ENCODE measurements at regions of chr2 and their contacts with region 1.

Region 1: DNA sequence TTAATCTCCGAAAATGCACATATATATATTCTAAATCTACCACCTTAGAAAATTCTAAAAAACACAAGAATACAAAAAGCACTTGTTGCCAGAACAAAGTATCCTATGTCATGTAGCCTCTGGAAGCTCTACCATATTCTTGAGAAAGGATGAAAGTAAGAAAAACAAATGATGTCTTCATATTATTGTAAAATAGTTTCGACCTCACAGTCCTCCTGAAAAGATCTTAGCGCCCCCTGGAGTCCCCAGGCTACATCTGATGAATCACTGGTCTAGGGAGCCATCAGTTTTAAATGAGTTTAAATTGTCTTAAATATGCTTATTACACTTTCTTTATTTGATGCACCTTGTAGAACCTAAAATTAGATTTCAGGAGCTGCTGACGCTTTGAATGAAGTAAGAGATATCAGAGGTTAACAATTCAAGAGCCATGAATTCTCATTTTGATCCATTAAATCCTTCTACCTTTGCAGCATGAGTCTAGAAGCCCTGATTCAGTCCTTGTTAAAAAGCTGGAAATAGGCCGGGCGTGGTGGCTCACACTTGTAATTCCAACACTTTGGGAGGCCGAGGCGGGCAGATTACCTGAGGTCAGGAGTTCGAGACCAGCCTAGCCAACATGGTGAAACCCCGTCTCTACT is 138.8 kb downstream of the MCFD2 start:
- DNase-seq: no peak
- ATAC-seq: peak; percentile 87
- H3K4me3 ChIP-seq: no peak overlapping the region
- H3K27ac ChIP-seq: no peak overlapping the region
- H3K4me1 ChIP-seq: no peaks in the 10 kb centered on the region
- H3K27me3 ChIP-seq: no peaks in the 10 kb centered on the region
- CTCF ChIP-seq: peak; percentile 67 to 74 (median 71)
- EP300 ChIP-seq: no peak
- POLR2A ChIP-seq: no peak
- RAD21 ChIP-seq: peak; percentile 83

Region 2: GRCh38 chr2:46041434-46041833 is 735.4 kb before region 1 on chr2:
- CTCF ChIA-PET with region 1: no interaction called
- POLR2A ChIA-PET with region 1: no interaction called
- RAD21 ChIA-PET with region 1: no interaction called
- SMC1A ChIA-PET with region 1: no interaction called
- in situ Hi-C with region 1: no loop called
- intact Hi-C with region 1: no loop called
- DNase-seq: no peak
- ATAC-seq: no peak
- H3K4me3 ChIP-seq: no peak overlapping the region
- H3K27ac ChIP-seq: no peak overlapping the region
- H3K4me1 ChIP-seq: no peaks in the 10 kb centered on the region
- H3K27me3 ChIP-seq: no peaks in the 10 kb centered on the region
- CTCF ChIP-seq: no peak
- EP300 ChIP-seq: no peak
- POLR2A ChIP-seq: no peak
- RAD21 ChIP-seq: no peak

Region 3: GRCh38 chr2:46657042-46657504 is 119.7 kb before region 1 on chr2:
- CTCF ChIA-PET with region 1: interaction called, 42 read pairs
- POLR2A ChIA-PET with region 1: no interaction called
- RAD21 ChIA-PET with region 1: no interaction called
- SMC1A ChIA-PET with region 1: interaction called, 15 read pairs
- in situ Hi-C with region 1: loop called (anchors 10 kb)
- intact Hi-C with region 1: loop called (anchors 1 kb)
- DNase-seq: no peak
- ATAC-seq: peak; percentile 94
- H3K4me3 ChIP-seq: no peak overlapping the region
- H3K27ac ChIP-seq: no peak overlapping the region
- H3K4me1 ChIP-seq: no peaks in the 10 kb centered on the region
- H3K27me3 ChIP-seq: no peaks in the 10 kb centered on the region
- CTCF ChIP-seq: peak; percentile 48 to 52 (median 50); a peak in 5 of 6 replicates
- EP300 ChIP-seq: no peak
- POLR2A ChIP-seq: no peak
- RAD21 ChIP-seq: peak; percentile 57

Region 4: GRCh38 chr2:46669996-46670793 is 106.6 kb before region 1 on chr2:
- CTCF ChIA-PET with region 1: interaction called, 4 read pairs
- POLR2A ChIA-PET with region 1: no interaction called
- RAD21 ChIA-PET with region 1: no interaction called
- SMC1A ChIA-PET with region 1: no interaction called
- in situ Hi-C with region 1: no loop called
- intact Hi-C with region 1: loop called (anchors 5 kb)
- DNase-seq: no peak
- ATAC-seq: no peak
- H3K4me3 ChIP-seq: no peak overlapping the region
- H3K27ac ChIP-seq: no peak overlapping the region
- H3K4me1 ChIP-seq: no peaks in the 10 kb centered on the region
- H3K27me3 ChIP-seq: peaks cover 0 to 4% of the 10 kb centered on the region in 2 experiments; a peak in 1 of 4 replicates
- CTCF ChIP-seq: no peak
- EP300 ChIP-seq: no peak
- POLR2A ChIP-seq: no peak
- RAD21 ChIP-seq: no peak

Region 5: DNA sequence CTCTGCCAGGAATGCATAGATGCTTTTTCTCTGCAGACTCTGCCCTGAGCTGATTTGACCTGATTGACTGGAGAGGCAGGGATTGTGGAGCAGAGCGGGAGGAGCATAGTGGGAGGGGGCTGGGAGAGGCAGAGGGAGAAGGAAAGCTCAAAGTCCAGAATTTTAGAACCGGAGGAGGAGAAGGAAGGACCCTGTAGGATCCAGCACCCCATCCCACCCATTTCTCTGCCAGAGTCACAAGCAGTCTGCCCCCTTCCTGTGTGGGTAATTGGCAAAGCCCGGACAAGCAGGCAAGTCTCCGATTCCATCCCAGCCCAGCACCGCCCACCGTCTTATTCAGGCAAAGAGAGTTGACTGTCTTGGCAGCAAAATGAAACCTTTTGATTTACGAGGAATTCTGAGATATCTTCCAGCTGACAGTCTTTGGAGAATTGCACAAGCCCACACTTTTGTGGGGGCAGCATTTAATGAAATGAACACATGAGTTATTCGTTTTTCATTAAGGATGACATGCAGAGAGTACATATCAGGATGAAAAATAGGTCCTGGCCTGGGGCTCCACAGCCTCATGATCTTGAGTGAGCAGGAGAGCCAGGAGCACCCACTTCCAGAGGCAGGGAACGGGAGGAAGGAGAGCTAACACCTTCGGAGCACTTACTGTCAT is 35.7 kb after region 1 on chr2:
- CTCF ChIA-PET with region 1: no interaction called
- POLR2A ChIA-PET with region 1: no interaction called
- RAD21 ChIA-PET with region 1: no interaction called
- SMC1A ChIA-PET with region 1: no interaction called
- in situ Hi-C with region 1: no loop called
- intact Hi-C with region 1: no loop called
- DNase-seq: no peak
- ATAC-seq: no peak
- H3K4me3 ChIP-seq: no peak overlapping the region
- H3K27ac ChIP-seq: no peak overlapping the region
- H3K4me1 ChIP-seq: no peaks in the 10 kb centered on the region
- H3K27me3 ChIP-seq: peaks cover 0 to 2% of the 10 kb centered on the region in 2 experiments; a peak in 2 of 4 replicates
- CTCF ChIP-seq: no peak
- EP300 ChIP-seq: no peak
- POLR2A ChIP-seq: no peak
- RAD21 ChIP-seq: no peak

Region 6: GRCh38 chr2:46887028-46887885 is 110.5 kb after region 1 on chr2:
- CTCF ChIA-PET with region 1: interaction called, 3 read pairs
- POLR2A ChIA-PET with region 1: no interaction called
- RAD21 ChIA-PET with region 1: no interaction called
- SMC1A ChIA-PET with region 1: no interaction called
- in situ Hi-C with region 1: no loop called
- intact Hi-C with region 1: loop called (anchors 5 kb)
- DNase-seq: no peak
- ATAC-seq: no peak
- H3K4me3 ChIP-seq: no peak overlapping the region
- H3K27ac ChIP-seq: no peak overlapping the region
- H3K4me1 ChIP-seq: no peaks in the 10 kb centered on the region
- H3K27me3 ChIP-seq: no peaks in the 10 kb centered on the region; a peak in 1 of 4 replicates
- CTCF ChIP-seq: no peak
- EP300 ChIP-seq: no peak
- POLR2A ChIP-seq: no peak
- RAD21 ChIP-seq: no peak

Region 7: GRCh38 chr2:47119001-47119400 is 342.2 kb after region 1 on chr2:
- CTCF ChIA-PET with region 1: no interaction called
- POLR2A ChIA-PET with region 1: no interaction called
- RAD21 ChIA-PET with region 1: no interaction called
- SMC1A ChIA-PET with region 1: no interaction called
- in situ Hi-C with region 1: no loop called
- intact Hi-C with region 1: no loop called
- DNase-seq: no peak
- ATAC-seq: no peak
- H3K4me3 ChIP-seq: no peak overlapping the region
- H3K27ac ChIP-seq: no peak overlapping the region
- H3K4me1 ChIP-seq: peaks cover 10% of the 10 kb centered on the region
- H3K27me3 ChIP-seq: no peaks in the 10 kb centered on the region
- CTCF ChIP-seq: no peak
- EP300 ChIP-seq: no peak
- POLR2A ChIP-seq: no peak
- RAD21 ChIP-seq: no peak

Region 8: DNA sequence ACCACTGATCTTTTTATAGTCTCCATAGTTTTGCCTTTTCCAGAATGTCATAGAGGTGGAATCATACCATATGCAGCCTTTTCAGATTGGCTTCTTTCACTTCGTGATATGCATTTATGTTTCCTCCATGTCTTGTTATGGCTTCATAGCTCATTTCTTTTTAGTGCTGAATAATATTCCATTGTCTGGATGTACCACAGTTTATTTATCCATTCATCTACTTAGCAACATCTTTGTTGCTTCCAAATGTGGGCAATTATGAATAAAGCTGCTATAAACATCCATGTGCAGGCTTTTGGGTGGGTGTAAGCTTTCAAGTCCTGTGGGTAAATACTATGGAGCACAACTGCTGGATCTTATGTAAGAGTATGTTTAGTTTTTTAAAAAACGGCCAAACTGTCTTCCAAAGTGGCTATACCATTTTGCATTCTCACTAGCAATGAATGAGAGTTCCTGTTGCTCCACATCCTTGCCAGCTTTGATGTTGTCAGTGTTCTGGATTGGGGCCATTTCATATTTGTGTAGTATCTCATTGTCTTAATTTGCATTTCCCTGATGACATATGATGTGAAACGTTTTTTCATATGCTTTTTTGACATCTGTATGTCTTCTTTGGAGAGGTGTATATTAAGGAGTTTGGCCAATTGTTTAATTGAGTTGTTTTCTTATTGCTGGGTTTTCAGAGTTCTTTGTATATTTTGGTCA is 357.7 kb after region 1 on chr2:
- CTCF ChIA-PET with region 1: no interaction called
- POLR2A ChIA-PET with region 1: no interaction called
- RAD21 ChIA-PET with region 1: no interaction called
- SMC1A ChIA-PET with region 1: no interaction called
- in situ Hi-C with region 1: no loop called
- intact Hi-C with region 1: no loop called
- DNase-seq: no peak
- ATAC-seq: no peak
- H3K4me3 ChIP-seq: no peak overlapping the region
- H3K27ac ChIP-seq: no peak overlapping the region
- H3K4me1 ChIP-seq: no peaks in the 10 kb centered on the region
- H3K27me3 ChIP-seq: no peaks in the 10 kb centered on the region
- CTCF ChIP-seq: no peak
- EP300 ChIP-seq: no peak
- POLR2A ChIP-seq: no peak
- RAD21 ChIP-seq: no peak

Measured in GM12878 (cell line).